ENCODE measurements at regions of chr1 and their contacts with region 1.

Region 1: DNA sequence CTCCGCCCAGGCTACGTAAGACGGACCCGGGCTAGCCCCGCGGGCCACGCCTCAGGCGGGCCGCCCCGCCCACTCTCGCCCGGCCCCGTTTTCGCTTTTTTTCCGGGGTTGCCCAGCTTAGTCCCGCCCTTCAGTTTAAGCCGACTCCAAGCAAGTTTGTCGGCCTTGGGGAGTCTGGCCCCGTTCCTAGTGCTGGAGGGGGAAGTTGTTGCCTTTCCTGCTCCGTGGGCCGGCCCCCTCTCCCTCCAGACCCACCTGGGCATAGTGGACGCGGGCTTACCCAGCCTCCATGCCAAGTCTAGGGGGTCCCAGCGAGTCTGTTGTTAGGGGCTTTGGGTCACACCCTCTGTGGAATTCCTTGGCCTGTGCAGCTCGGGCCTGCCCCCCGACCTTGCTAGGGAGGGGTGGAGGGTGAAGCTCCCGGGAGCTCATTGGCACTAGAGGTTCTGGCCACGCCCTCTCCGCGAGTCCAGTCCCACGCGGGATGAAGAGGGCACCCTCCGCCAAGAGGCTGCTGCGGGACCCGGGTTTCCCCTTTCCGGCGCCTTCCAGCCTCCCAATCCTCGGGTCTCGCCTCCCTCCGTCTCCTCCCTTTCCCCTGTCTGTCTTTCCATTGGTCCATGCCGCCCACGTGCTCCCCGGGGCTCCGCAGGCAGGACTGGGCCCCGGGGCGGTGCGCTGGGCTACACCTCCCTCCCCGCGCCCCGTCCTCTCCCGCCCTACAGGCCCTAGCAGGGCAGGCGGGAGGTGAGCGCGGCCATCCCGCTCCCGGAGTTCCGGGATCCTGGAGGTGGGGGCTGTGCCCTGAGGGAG is 3.3 kb downstream of the RUSC1 start:
- DNase-seq: peak; percentile 99
- H3K4me3 ChIP-seq: peak overlapping the region; percentile 68 to 94 (median 84)
- H3K27ac ChIP-seq: peak overlapping the region; percentile 99
- H3K4me1 ChIP-seq: peaks cover 28 to 73% (median 59%) of the 10 kb centered on the region in 4 donors
- H3K27me3 ChIP-seq: no peaks in the 10 kb centered on the region
- CTCF ChIP-seq: peak in 1 of 3 experiments; percentile 25
- EP300 ChIP-seq: no peak
- POLR2A ChIP-seq: peak; percentile 82

Region 2: DNA sequence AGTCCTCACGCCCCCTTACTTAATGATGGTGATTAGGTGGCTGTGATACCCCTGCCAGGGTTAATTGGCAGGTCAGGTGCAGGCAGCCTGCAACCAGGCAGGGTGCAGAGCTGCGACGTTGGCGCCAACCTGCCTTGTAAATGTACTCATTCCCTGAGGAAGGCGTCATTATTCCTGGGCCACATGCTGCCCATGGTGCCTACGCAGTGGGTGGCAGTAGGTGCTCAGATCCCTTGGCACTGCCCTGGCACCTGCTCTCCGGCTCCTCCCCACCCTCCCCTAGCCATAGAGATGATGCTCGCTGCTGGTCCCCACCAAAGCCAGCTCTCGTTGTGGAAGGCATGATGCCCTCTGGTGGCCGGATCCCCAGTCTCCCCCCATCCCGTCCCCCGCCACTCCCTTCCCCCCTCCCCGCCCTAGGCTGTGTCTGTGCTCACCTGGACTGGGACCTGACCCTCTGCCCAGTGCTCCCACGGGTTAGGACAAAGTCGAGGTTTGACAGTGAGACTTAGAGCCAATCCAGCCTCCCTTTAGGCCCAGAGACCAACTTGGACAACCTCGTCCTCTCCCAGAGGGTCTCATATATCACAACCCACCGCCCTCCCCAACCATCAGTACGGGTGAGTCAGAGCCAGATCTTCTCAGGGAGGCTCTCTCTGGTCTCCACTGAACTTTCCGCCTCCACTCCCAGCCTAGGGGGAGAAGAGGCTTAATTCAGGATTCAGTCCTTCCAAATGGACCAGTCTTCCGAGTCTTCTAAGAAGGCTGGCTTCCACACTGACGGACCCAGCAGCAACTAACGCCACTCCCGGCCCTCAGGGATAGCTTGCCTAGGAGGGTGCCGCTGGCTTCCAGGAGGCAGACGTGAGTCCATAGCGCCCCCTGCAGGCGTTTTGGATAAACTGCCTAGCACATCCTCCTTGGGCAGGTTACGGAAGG is 156.6 kb before region 1 on chr1:
- intact Hi-C with region 1: no loop called
- DNase-seq: peak; percentile 95
- H3K4me3 ChIP-seq: peak overlapping the region; percentile 10 to 42 (median 20)
- H3K27ac ChIP-seq: peak overlapping the region; percentile 29 to 66 (median 49)
- H3K4me1 ChIP-seq: peaks cover 22 to 38% (median 36%) of the 10 kb centered on the region in 4 donors
- H3K27me3 ChIP-seq: no peaks in the 10 kb centered on the region
- CTCF ChIP-seq: peak; percentile 85 to 95 (median 89)
- EP300 ChIP-seq: no peak
- POLR2A ChIP-seq: no peak

Region 3: DNA sequence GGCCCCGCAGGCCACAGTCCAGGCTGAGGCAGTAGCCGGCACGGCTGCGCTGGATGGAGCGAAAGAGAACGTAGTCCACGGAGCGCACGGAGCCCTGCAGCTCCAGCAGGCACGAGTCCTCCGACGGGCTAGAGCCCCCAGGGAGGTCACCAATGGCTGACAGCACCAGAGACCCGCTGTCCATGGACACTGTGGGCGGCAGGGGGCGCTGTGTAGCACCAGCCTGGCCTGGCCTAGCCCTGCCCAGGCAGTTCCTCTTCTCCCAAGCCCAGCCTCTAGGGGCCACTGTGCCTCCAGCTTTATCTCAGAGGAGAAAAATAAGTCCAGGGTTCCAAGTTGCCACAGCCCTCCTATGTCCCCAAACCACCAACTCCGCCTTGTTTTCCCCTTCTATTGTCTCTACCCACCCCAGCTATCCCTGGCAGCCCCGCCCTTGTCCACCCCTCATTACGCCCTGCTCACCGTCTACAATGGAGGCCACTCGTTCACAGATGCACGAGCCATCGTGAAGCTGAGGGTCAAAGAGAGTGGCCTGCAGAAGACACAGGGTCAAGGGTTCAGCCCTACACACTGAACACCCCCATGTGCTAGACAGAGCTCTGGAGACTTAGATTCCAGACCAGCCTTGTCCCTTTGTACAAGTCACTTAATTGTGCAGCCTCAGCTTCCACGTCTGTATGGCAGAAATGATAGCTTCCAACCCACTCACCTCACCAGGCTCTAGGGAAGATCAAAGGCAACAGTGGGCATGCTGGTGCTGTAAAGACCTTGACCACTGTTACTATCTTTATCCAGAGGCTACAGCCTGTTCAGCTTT is 73.2 kb before region 1 on chr1:
- intact Hi-C with region 1: loop called (anchors 2 kb)
- DNase-seq: peak; percentile 97
- H3K4me3 ChIP-seq: peak overlapping the region; percentile 30 to 37 (median 34)
- H3K27ac ChIP-seq: peak overlapping the region; percentile 62 to 69 (median 67)
- H3K4me1 ChIP-seq: peaks cover 25 to 51% (median 38%) of the 10 kb centered on the region in 4 donors
- H3K27me3 ChIP-seq: no peaks in the 10 kb centered on the region
- CTCF ChIP-seq: peak; percentile 98 to 100 (median 99)
- EP300 ChIP-seq: no peak
- POLR2A ChIP-seq: no peak

Region 4: GRCh38 chr1:155277070-155277895 is 46.7 kb before region 1 on chr1 and contains the start of gene HCN3:
- intact Hi-C with region 1: loop called (anchors 2 kb)
- DNase-seq: peak; percentile 99
- H3K4me3 ChIP-seq: peak within 1 kb of the TSS; percentile 71 to 84 (median 77)
- H3K27ac ChIP-seq: peak within 1 kb of the TSS; percentile 74 to 85 (median 78)
- H3K4me1 ChIP-seq: peaks cover 20 to 38% (median 34%) of the 10 kb centered on the region in 4 donors
- H3K27me3 ChIP-seq: no peaks in the 10 kb centered on the region
- CTCF ChIP-seq: peak; percentile 67 to 84 (median 73)
- EP300 ChIP-seq: no peak
- POLR2A ChIP-seq: no peak
- total RNA-seq, gene HCN3: 1.0 to 2.1 (median 1.4) TPM

Measured in esophagus muscularis mucosa (tissue), 4 donors.